GM10248 (cell line): ENCODE measurements at regions of chr17 and their contacts with region 1.

Region 1: GRCh38 chr17:75261336-75262111 is at the starts of genes GGA3 and MRPS7:
- DNase-seq: peak; percentile 95
- CTCF ChIP-seq: no peak

Region 2: DNA sequence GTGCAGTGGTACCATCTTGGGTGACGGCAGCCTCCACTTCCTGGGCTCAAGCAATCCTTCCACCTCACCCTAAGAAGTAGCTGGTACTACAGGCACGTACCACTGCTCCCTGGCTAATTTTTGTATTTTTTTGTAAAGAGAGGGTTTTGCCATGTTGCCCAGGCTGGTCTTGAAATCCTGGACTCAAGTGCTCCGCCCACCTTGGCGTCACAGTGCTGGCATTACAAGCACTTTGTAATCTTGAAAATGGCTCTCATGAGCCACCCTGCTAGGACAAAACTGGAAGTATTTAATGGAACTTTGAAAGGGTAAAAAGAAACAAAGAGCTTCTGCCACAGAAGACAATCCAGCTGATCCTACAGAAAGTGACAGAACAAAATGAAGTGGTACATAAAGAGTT is 88.0 kb before region 1 on chr17:
- CTCF ChIA-PET with region 1: no interaction called
- POLR2A ChIA-PET with region 1: no interaction called
- DNase-seq: no peak
- CTCF ChIP-seq: no peak

Region 3: DNA sequence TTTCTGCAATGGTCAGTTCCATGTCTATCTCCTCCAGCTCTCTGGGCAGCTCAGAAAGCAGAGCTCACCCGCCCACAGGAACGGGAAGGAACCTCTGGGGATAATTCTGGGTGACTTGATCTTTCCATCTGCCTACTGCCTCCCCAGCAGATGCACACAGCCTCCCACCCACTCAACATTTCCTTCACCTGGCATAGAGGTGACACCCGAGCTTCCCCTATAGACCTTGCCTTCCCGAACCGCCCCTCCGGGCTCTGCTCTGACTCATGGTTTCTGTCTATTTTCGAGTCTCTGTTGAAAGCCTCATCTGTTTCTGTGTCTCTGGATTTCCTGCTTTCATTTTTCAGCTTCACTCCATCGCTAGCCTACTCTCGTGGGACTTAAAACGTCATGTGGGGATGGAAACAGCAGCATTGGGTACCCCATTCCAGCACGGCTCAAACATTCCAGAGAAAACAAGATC is 11.5 kb before region 1 on chr17:
- CTCF ChIA-PET with region 1: interaction called, 32 read pairs
- POLR2A ChIA-PET with region 1: interaction called, 27 read pairs
- DNase-seq: peak; percentile 82
- CTCF ChIP-seq: no peak